ENCODE measurements at regions of chr6 and their contacts with region 1.

Region 1: DNA sequence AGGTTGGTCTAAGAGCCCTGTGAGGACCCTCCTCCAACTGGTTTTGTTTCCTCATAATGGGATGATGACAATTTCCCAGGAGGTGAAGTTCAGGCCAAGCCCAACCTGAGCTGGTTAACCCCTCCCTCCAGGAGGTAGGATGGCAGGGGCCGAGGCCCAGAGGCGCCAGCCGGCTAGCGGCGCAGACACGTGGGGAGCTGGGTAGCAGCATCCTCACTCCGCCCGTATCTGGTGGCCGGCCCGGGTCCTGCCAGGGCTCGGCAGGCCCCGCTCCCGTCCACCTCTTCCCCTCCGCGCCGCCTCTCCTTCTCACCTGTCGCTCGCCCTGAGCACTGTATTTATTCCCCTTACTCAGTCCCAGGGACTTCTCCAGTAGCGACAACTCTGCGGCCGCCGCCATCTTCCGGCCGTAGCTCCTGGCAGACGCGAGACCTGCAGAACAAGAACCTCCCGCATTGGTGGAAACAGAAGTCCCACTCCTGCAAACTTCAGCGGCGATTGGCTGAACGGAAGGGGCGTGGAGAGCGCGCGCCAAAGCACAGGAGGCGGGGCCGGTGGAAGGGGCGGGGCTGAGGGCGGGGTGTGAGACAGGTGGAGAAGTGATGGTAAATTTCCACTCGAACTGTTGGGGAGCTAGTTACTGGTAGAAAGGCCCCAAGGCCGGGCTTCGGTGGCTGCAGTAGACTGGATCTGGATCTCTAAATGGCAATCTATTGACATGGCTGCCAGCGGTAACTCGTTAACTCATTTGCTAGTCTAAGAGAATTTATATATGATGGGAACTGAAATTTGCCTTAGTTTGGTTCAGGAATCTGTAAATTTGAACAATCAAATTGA is at the start of gene EEF1E1:
- DNase-seq: peak; percentile 98
- ATAC-seq: peak; percentile 98
- H3K4me3 Mint-ChIP-seq: peak within 1 kb of the TSS; percentile 96
- H3K27ac Mint-ChIP-seq: peak within 1 kb of the TSS; percentile 96
- H3K4me1 Mint-ChIP-seq: peaks cover 31% of the 10 kb centered on the region
- H3K27me3 Mint-ChIP-seq: peaks cover 8% of the 10 kb centered on the region
- total RNA-seq, gene EEF1E1: 32.1 to 47.1 TPM

Region 2: GRCh38 chr6:7992002-7992815 is 110.1 kb before region 1 on chr6:
- CTCF ChIA-PET with region 1: no interaction called
- DNase-seq: no peak
- ATAC-seq: no peak
- H3K4me3 Mint-ChIP-seq: no peak overlapping the region
- H3K27ac Mint-ChIP-seq: no peak overlapping the region
- H3K4me1 Mint-ChIP-seq: no peaks in the 10 kb centered on the region
- H3K27me3 Mint-ChIP-seq: no peaks in the 10 kb centered on the region

Region 3: DNA sequence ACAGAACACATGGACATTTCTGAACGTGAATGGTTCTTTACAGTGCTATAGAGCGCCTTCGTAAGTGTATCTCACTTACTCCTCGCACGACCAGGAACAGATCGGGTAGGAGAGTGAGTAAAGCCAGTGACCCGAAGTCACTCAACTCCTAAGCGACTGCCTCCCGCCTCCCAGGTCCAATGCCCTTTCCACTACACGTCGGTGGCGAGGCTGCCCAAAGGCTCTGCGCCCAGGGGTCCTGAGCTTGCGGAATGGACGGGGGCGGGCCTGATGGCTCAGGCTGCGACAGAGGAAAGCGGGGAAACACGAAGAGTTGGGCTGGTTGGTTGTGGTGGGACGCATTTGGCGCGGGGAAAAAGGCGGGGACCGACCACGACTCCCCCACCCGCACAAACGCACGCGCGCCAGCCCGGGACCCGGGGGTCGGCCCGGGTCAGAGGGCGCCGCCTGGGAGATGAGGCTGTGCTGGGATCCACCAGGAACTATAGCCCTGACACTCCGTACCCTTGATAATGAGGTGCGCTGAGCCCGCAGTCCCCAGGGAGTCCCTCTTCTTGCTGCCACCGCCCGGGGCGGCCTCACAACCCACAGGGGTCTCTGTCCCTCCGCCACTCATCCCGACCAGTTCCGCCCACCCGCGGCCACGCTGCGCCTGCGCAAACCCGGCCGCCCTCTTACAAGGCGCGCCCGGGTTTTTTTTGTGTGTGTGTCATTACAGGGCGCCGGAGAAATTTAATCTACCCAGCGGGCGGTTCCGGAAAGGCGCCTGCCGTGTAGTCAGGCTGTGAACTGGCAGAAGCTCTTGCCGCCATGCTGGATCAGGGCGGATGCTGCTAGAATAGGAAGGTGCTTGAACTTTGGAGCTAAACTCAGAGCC is 38.3 kb before region 1 on chr6 and contains the start of gene BLOC1S5:
- CTCF ChIA-PET with region 1: interaction called, 11 read pairs
- DNase-seq: peak; percentile 98
- ATAC-seq: peak; percentile 95
- H3K4me3 Mint-ChIP-seq: peak within 1 kb of the TSS; percentile 95
- H3K27ac Mint-ChIP-seq: peak within 1 kb of the TSS; percentile 95
- H3K4me1 Mint-ChIP-seq: peaks cover 31% of the 10 kb centered on the region
- H3K27me3 Mint-ChIP-seq: no peaks in the 10 kb centered on the region
- total RNA-seq, gene BLOC1S5: 18.2 to 23.7 TPM